AG04449 (cell line): ENCODE measurements at regions of chr4 and their contacts with region 1.

Region 1: GRCh38 chr4:55345980-55346850 is at the start of gene SRD5A3:
- DNase-seq: no peak
- H3K4me3 ChIP-seq: peak within 1 kb of the TSS; percentile 75
- CTCF ChIP-seq: peak; percentile 84

Region 2: DNA sequence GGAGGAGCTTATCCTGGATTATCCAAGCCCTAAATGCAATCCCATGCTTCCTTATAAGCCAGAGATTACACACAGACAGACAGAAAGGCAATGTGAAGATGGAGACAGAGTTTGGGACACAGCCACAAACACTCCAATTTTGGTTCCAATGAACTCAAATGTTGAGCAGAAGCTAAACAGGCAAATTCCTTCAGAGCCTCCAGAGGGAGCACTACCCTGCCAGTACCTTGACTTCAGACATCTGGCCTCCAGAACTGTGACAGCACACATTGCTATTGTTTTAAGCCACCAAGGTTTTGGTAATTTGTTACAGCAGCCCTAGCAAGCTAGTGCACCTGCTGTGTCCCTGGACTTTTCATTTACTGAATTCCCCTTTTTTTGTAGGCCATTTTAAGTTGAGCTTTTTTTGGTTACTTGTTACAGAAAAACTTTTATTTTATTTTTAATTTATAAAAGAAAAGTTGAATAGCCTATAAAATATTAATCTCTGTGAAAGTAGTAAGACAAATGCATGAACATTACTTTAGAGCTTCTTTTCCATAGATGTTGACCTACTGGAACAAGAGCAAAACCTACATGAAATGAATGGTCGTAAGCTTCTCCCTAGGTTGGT is 33.6 kb before region 1 on chr4:
- CTCF ChIA-PET with region 1: interaction called, 13 read pairs
- POLR2A ChIA-PET with region 1: no interaction called
- DNase-seq: no peak
- H3K4me3 ChIP-seq: no peak overlapping the region
- CTCF ChIP-seq: peak; percentile 72

Region 3: GRCh38 chr4:55330241-55330640 is 16.0 kb before region 1 on chr4:
- CTCF ChIA-PET with region 1: interaction called, 18 read pairs
- POLR2A ChIA-PET with region 1: no interaction called
- DNase-seq: no peak
- H3K4me3 ChIP-seq: no peak overlapping the region
- CTCF ChIP-seq: no peak

Region 4: DNA sequence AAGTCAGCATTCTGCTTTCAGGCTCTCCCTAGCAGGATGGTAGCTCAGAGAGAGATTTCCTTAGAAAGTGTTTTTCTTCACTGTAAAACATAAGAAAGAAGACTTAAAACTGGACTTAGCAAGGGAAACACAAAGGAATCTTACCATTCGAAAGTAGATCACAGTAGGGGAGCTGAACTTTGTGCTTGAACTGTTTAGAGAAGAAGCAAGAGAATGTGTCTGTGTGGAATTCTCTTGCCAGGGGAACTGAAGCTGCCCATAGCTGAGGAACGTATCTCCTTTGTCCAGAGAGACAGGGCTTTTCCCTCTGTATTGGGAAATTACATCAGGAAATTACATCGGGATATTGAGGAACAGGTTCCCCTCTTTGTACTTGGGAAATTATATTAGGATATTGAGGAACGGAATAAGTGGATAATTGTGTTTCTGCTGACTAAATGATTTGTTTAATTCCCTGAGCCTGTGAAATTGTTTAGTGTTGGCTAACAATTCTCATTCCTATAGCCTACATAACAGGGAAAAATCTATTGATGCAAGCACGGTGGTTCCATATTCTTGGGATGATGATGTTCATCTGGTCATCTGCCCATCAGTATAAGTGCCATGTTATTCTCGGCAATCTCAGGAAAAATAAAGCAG is 21.0 kb after region 1 on chr4:
- CTCF ChIA-PET with region 1: interaction called, 13 read pairs
- POLR2A ChIA-PET with region 1: no interaction called
- DNase-seq: no peak
- H3K4me3 ChIP-seq: no peak overlapping the region
- CTCF ChIP-seq: no peak

Region 5: DNA sequence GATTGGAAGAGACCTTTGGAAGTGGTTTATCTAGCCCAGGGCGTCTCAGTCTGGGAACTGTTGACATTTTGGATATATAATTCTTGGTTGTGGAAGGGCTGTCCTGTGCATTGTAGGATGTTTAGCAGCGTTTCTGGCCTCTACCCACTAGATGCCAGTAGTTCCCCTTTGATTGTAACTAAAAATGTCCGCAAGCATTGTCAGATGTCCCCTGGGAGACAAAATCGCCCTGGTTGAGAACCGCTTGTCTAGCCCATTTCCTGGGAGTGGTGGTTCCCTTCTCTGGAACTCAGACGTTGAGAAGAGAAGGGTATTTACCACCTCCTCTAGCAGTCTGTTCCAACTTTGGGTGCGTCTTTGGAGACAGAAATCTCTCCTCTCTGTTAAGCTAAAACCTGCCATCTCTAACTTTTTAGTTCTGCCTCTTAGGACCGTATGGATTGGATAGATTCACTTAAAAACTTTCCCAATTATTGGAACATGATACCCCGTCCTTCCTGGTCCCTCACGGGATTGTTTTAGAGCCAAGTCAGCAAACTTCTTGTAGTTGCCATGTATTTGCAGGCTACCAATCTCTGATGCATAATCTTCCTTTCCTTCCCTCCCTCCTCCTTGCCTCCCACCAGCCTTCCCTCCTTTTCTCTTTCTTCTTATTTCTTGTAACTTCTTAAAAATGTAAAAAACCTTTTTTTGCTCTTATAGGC is 63.4 kb after region 1 on chr4:
- CTCF ChIA-PET with region 1: interaction called, 21 read pairs
- POLR2A ChIA-PET with region 1: no interaction called
- DNase-seq: no peak
- H3K4me3 ChIP-seq: no peak overlapping the region
- CTCF ChIP-seq: peak; percentile 6

Region 6: GRCh38 chr4:55444827-55445226 is 98.6 kb after region 1 on chr4:
- CTCF ChIA-PET with region 1: interaction called, 13 read pairs
- POLR2A ChIA-PET with region 1: no interaction called
- DNase-seq: no peak
- H3K4me3 ChIP-seq: no peak overlapping the region
- CTCF ChIP-seq: peak; percentile 49

Region 7: DNA sequence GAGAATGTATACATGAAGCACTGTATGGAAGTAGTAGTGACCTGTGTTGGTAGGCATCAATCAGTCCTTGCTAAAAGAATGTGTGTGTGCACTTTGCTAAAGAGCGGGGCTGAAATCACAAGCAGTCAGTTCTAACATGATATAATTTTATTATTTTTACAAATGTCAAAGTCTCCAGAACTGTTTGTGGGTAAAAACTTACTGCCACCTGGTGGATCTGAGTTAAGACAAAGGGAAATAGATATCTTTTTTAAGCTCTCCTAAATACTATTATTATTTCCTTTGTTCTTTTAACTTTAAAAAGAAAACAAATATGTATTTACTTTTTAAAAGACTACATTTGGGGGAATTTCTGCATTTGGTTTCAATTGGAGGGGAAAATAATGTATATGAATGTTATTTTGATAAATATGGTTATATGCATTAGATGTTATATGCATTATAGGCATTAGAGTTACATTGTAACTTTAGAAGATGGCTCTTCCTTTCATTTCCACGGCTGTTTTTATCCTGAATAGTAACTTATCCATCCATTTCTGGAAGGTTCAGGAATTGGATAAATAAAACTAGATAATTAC is 208.3 kb after region 1 on chr4:
- CTCF ChIA-PET with region 1: interaction called, 23 read pairs
- POLR2A ChIA-PET with region 1: no interaction called
- DNase-seq: no peak
- H3K4me3 ChIP-seq: no peak overlapping the region
- CTCF ChIP-seq: peak; percentile 27